Naive thymus-derived CD8-positive, alpha-beta T cell (primary cell): ENCODE measurements at regions of chr20 and their contacts with region 1.

Region 1: DNA sequence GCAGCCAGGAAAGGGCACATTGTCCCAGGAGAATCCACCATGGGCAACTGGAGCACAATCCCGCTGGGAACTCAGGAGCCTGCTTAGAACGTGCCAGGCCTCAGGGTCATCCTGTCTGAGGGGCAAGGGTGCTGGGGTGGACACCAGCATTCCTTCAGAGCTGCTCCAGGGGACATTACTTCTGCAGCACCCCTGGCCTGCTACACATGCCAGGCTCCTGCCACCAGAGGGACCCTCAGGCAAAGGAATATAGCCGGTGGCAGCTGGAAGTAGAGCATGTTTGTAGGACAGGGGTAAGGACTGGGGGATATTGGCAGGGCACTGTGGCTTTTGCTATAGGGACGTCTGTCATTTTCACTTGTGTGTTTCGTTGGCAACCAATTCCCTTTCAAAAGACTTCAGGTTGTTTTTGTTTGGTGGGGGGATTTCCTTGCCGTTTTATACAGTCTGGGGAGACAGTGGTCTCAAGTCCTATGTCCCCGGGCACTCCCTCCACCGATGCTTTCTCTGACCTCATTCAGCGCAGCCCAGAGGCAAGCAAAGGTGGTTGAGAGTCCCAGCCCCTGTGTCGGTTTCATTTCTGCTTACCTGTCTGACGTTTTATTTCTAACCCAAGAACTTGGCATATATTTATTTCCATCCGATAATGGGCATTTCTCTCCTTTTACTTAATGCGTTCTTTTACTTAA is 130.8 kb downstream of the JPH2 start:
- DNase-seq: peak; percentile 53 to 88 (median 76)
- ATAC-seq: peak; percentile 98 to 100
- H3K4me3 Mint-ChIP-seq: no peak overlapping the region
- H3K27ac Mint-ChIP-seq: peak overlapping the region in 8 of 10 donors; percentile 11 to 93 (median 70)
- H3K4me1 Mint-ChIP-seq: peaks cover 14 to 34% (median 17%) of the 10 kb centered on the region in 4 donors
- H3K27me3 Mint-ChIP-seq: peaks cover 0 to 1% (median 0%) of the 10 kb centered on the region in 5 donors

Region 2: GRCh38 chr20:44018259-44018941 is 37.8 kb before region 1 on chr20:
- POLR2A ChIA-PET with region 1: no interaction called
- DNase-seq: peak in 1 of 10 donors; percentile 45
- ATAC-seq: no peak
- H3K4me3 Mint-ChIP-seq: peak overlapping the region in 1 of 10 donors; percentile 73
- H3K27ac Mint-ChIP-seq: no peak overlapping the region
- H3K4me1 Mint-ChIP-seq: peaks cover 20 to 41% (median 34%) of the 10 kb centered on the region in 4 donors
- H3K27me3 Mint-ChIP-seq: peaks cover 6 to 20% (median 8%) of the 10 kb centered on the region in 5 donors

Region 3: GRCh38 chr20:44069203-44070011 is 13.3 kb after region 1 on chr20:
- POLR2A ChIA-PET with region 1: interaction called, 56 read pairs
- DNase-seq: peak; percentile 49 to 97 (median 89)
- ATAC-seq: peak; percentile 59 to 62
- H3K4me3 Mint-ChIP-seq: peak overlapping the region; percentile 74 to 95 (median 90)
- H3K27ac Mint-ChIP-seq: peak overlapping the region; percentile 88 to 100 (median 100)
- H3K4me1 Mint-ChIP-seq: peaks cover 19 to 87% (median 78%) of the 10 kb centered on the region in 4 donors
- H3K27me3 Mint-ChIP-seq: peaks cover 0 to 2% (median 0%) of the 10 kb centered on the region in 5 donors